ENCODE measurements at regions of chr2 and their contacts with region 1.

Region 1: GRCh38 chr2:15636972-15637785 is 45.5 kb downstream of the DDX1 start:
- DNase-seq: peak; percentile 19
- H3K4me3 Mint-ChIP-seq: no peak overlapping the region
- H3K27ac Mint-ChIP-seq: no peak overlapping the region
- H3K4me1 Mint-ChIP-seq: no peaks in the 10 kb centered on the region
- H3K27me3 Mint-ChIP-seq: no peaks in the 10 kb centered on the region

Region 2: DNA sequence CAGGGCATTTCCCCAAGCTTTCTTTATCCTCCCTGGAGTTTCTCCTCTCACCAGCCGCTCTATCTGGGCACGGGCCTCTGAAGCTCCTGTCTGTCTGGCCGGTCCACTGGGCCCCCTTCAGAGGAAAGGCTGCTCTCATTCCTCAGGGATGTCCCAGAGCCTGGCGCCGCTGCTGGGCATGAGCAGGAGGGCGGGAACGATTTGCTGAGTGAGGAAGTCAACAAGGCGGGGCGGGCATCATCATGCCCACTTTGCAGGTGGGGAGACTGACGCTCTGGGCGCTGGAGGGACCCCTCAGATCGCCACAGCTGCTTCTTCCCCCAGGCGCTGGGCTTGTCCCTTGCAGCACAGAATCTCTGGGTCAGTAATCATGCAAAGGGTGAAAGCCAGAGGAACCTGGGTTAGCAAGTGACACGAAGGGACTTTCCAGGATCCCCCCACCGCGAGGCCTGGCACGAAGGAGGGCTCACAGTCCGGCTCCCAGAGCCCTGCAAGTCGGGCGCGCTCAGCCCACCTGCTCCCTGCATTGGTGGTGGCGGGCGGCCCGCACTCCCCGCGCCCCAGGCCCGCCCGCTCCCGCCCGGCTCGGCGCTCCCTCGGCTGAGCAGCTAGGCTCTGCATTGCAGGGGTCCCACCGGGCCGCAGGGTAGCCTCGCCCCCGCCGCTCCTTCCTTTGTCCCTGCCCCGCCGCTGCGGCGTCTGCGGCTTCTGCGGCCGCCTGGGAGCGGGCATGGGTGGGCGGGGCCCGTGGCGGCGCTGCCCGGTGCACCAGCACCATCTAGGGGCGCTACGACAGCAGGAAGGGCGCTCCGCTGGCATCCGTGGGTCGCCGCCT is 870.7 kb after region 1 on chr2:
- intact Hi-C with region 1: loop called (anchors 10 kb)
- DNase-seq: no peak
- H3K4me3 Mint-ChIP-seq: no peak overlapping the region
- H3K27ac Mint-ChIP-seq: no peak overlapping the region
- H3K4me1 Mint-ChIP-seq: no peaks in the 10 kb centered on the region
- H3K27me3 Mint-ChIP-seq: peaks cover 27% of the 10 kb centered on the region